ENCODE measurements at regions of chr3 and their contacts with region 1.

Region 1: DNA sequence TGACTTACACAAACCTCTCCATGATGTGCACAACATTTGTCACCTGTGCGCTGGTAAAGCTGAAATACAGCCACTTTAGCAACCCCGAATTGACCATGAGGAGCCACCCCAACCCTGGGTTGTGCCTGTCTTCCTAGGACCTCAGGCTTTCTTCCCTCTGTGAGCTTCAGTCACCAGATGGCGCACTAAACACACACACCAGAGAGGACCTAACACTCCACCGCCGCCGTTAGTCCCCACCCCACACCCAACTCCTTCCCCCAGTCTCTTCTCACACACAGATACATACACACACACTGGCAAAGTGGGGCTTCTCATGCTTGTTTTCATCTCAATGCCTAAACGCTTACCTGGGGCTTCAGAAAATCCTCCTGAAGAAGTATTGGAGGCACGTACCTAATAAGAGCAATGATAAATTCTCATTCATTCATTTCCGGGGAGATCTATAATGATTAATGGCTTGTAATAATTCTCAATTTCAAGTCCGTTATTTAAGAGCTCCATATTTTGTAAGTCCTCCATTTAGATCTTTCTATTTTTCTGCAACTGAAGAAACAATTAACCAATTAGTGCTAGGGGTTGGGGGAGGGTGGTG is 2.1 kb upstream of the CCDC80 start:
- DNase-seq: peak; percentile 93

Region 2: GRCh38 chr3:110955301-110955880 is 1687.6 kb before region 1 on chr3:
- intact Hi-C with region 1: no loop called
- DNase-seq: no peak

Region 3: DNA sequence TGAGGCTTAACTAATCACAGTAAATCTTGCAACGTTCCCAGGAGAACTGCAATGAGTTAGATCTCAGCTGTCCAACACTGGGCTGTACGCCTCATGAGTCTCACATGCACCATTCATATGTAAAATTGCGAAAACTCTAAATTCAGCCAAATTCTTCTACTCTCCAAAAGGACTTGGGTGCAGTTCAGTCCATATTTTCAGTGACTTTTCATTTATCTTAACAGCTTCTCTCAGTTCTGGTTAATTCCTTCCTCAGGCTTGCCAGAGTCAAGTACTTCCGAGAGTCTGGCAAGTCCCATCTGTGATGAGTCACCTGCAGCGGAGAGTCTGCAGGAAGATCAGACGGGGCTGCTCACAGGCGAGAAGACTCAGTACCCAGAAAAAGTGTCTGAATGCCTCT is 13.6 kb before region 1 on chr3:
- intact Hi-C with region 1: no loop called
- DNase-seq: peak; percentile 88

Region 4: GRCh38 chr3:112979240-112979832 is 336.3 kb after region 1 on chr3:
- intact Hi-C with region 1: loop called (anchors 5 to 10 kb)
- DNase-seq: no peak